Left ventricle myocardium superior (tissue), 1 donor: ENCODE measurements at regions of chr17 and their contacts with region 1.

Region 1: DNA sequence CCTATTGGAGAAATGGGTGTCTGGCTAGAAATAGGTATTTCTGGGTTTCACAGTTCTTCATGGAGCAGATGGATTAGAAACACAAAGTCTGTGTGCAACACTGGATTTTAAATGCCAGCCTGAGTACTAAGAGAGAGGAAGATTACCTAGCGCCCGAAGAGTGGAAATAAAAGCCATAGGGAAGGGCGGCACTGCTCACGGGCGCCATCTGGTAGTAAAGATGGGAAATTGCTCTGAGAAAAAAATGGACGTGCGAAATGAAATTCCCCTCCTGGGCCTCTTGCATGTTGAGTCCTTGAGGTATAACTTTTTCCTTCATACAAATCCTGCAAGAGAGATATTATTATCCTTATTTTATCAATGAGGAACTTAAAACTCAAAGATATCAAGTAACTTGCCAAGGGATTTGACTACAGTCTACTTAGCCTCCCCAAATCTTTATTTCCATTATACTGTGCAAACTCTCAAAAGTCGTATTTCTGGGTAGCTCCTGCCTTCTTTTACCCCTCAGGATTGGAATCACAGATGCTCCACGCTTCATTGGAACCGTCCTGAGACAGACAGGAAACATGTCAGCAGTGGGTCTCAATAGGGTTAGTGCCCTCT is 72.8 kb downstream of the MMD start:
- DNase-seq: peak; percentile 56
- ATAC-seq: peak; percentile 83

Region 2: GRCh38 chr17:54992797-54993639 is 355.8 kb before region 1 on chr17:
- intact Hi-C with region 1: loop called (anchors 2 kb)
- DNase-seq: no peak
- ATAC-seq: peak; percentile 44

Region 3: GRCh38 chr17:55177159-55177854 is 171.5 kb before region 1 on chr17:
- intact Hi-C with region 1: no loop called
- DNase-seq: no peak
- ATAC-seq: no peak

Region 4: GRCh38 chr17:55437159-55437605 is 88.3 kb after region 1 on chr17:
- intact Hi-C with region 1: no loop called
- DNase-seq: no peak
- ATAC-seq: peak; percentile 43

Region 5: GRCh38 chr17:55926276-55926990 is 577.6 kb after region 1 on chr17:
- intact Hi-C with region 1: no loop called
- DNase-seq: no peak
- ATAC-seq: no peak